ENCODE measurements at regions of chr7 and their contacts with region 1.

Region 1: GRCh38 chr7:65475734-65476319 is 102.2 kb downstream of the ZNF92 start:
- DNase-seq: peak in 1 of 4 donors; percentile 3
- ATAC-seq: no peak
- H3K4me3 ChIP-seq: no peak overlapping the region
- H3K27ac ChIP-seq: no peak overlapping the region
- H3K4me1 ChIP-seq: no peaks in the 10 kb centered on the region
- H3K27me3 ChIP-seq: no peaks in the 10 kb centered on the region
- CTCF ChIP-seq: no peak
- POLR2A ChIP-seq: no peak

Region 2: DNA sequence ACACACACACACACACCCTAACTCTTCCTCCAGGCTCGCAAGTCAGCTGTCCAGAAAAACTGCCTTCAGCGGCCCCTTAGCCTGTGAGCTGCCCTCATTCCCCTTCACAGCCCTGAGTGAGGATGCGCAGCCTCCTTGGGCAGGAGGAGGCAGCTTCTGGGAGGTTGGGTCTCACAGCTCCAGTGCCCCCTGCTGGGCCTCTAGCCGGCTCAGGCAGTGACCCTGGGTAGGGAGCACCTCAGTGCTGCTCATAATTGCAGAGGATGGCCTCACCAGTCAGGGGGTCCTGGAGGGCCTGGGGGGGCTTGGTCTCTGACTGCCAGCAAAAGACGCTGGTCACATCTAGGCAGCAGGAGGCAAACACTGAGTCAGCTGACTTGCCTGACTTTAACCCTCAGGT is 529.1 kb before region 1 on chr7:
- intact Hi-C with region 1: loop called (anchors 10 kb)
- DNase-seq: peak in 2 of 4 donors; percentile 28 to 31
- ATAC-seq: no peak
- H3K4me3 ChIP-seq: no peak overlapping the region
- H3K27ac ChIP-seq: no peak overlapping the region
- H3K4me1 ChIP-seq: peaks cover 12% of the 10 kb centered on the region
- H3K27me3 ChIP-seq: peaks cover 0 to 6% of the 10 kb centered on the region in 2 donors
- CTCF ChIP-seq: peak in 1 of 7 experiments; percentile 5
- POLR2A ChIP-seq: no peak